ENCODE measurements at regions of chr15 and their contacts with region 1.

Region 1: DNA sequence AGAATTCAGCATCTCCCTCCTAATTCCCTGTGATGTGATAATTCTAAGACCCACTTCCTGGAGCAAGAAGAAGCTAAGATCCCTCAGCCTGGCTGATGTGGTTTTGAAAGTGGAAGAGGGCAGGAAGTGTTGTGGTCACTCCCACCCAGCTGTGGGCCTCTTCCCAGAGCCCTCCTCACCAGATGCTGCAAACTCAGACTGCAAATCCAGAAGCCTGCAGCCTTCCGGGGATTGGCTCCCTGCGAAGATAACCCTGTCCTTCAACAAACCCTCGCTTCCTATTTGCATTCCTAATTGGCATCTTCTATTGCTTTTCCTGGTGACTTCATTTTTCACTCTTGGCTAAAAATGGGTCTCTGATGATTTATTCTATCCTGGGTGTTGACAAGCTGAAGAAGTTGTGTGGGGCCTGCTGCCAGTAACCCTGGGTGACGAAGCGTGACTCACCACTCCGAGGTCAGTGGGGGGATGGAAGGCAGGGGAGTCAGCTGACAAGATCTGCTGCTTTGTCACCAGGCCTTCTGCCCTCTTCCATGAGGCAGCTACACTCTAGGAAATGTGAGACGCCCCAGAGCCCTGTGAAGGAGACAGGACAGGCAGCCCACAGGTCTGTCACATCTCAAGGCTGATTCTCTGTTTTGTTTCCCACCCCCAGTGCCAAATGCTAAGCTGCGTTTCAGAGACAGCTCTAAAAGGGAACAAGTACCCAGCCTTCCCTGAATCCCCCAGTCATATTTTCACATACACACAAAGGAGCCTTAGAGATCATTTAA is 99.7 kb upstream of the LIPC start:
- DNase-seq: peak; percentile 94
- H3K4me3 Mint-ChIP-seq: peak overlapping the region; percentile 61
- H3K27ac Mint-ChIP-seq: peak overlapping the region; percentile 98
- H3K4me1 Mint-ChIP-seq: peaks cover 49% of the 10 kb centered on the region
- H3K27me3 Mint-ChIP-seq: no peaks in the 10 kb centered on the region

Region 2: GRCh38 chr15:58115692-58116091 is 216.4 kb before region 1 on chr15:
- intact Hi-C with region 1: no loop called
- DNase-seq: no peak
- H3K4me3 Mint-ChIP-seq: no peak overlapping the region
- H3K27ac Mint-ChIP-seq: no peak overlapping the region
- H3K4me1 Mint-ChIP-seq: no peaks in the 10 kb centered on the region
- H3K27me3 Mint-ChIP-seq: peaks cover 25% of the 10 kb centered on the region

Region 3: DNA sequence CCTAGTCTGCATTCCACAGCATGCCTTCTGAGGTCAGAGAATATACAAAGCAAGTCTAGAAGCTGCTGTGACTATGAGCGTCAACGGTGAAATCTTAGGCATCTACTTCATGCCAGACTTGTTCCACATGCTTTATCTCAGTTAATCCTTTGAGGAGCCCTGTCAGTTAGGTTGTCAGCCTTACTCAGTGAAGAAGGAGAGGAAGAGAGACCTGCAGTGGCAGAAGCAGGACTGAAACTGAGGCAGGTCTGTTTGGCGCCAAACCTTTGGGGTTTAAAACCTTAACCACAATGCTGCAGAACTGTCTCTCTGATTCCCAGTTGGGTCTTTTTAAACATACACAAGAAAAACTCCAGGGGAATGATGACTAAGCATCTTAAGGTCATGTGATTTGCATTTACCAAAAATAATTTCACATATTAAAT is 39.3 kb before region 1 on chr15:
- intact Hi-C with region 1: loop called (anchors 5 kb)
- DNase-seq: peak; percentile 68
- H3K4me3 Mint-ChIP-seq: peak overlapping the region; percentile 36
- H3K27ac Mint-ChIP-seq: peak overlapping the region; percentile 58
- H3K4me1 Mint-ChIP-seq: peaks cover 29% of the 10 kb centered on the region
- H3K27me3 Mint-ChIP-seq: no peaks in the 10 kb centered on the region

Region 4: GRCh38 chr15:58348095-58348812 is 16.2 kb after region 1 on chr15:
- intact Hi-C with region 1: loop called (anchors 2 kb)
- DNase-seq: peak; percentile 34
- H3K4me3 Mint-ChIP-seq: no peak overlapping the region
- H3K27ac Mint-ChIP-seq: no peak overlapping the region
- H3K4me1 Mint-ChIP-seq: peaks cover 12% of the 10 kb centered on the region
- H3K27me3 Mint-ChIP-seq: no peaks in the 10 kb centered on the region

Region 5: GRCh38 chr15:58457381-58457965 is 125.4 kb after region 1 on chr15:
- intact Hi-C with region 1: loop called (anchors 1 kb)
- DNase-seq: peak; percentile 82
- H3K4me3 Mint-ChIP-seq: peak overlapping the region; percentile 50
- H3K27ac Mint-ChIP-seq: peak overlapping the region; percentile 84
- H3K4me1 Mint-ChIP-seq: peaks cover 83% of the 10 kb centered on the region
- H3K27me3 Mint-ChIP-seq: no peaks in the 10 kb centered on the region

Region 6: GRCh38 chr15:58770857-58771620 is 438.9 kb after region 1 on chr15 and contains the start of gene MINDY2:
- intact Hi-C with region 1: loop called (anchors 2 kb)
- DNase-seq: peak; percentile 98
- H3K4me3 Mint-ChIP-seq: no peak within 1 kb of the TSS
- H3K27ac Mint-ChIP-seq: peak within 1 kb of the TSS; percentile 93
- H3K4me1 Mint-ChIP-seq: peaks cover 16% of the 10 kb centered on the region
- H3K27me3 Mint-ChIP-seq: peaks cover 2% of the 10 kb centered on the region
- total RNA-seq, gene MINDY2: 10.1 and 10.9 TPM in 2 replicates